HepG2 (cell line): ENCODE measurements at regions of chr12 and their contacts with region 1.

Region 1: GRCh38 chr12:86241600-86241999 is 14.6 kb downstream of the MGAT4C start:
- DNase-seq: no peak
- ATAC-seq: no peak
- H3K4me3 ChIP-seq: no peak overlapping the region
- H3K27ac ChIP-seq: no peak overlapping the region
- H3K4me1 ChIP-seq: no peaks in the 10 kb centered on the region
- H3K27me3 ChIP-seq: no peaks in the 10 kb centered on the region
- CTCF ChIP-seq: no peak
- EP300 ChIP-seq: no peak
- POLR2A ChIP-seq: no peak
- RAD21 ChIP-seq: no peak

Region 2: GRCh38 chr12:86213012-86213411 is 28.6 kb before region 1 on chr12:
- CTCF ChIA-PET with region 1: no interaction called
- POLR2A ChIA-PET with region 1: no interaction called
- in situ Hi-C with region 1: no loop called
- intact Hi-C with region 1: loop called (anchors 1 kb)
- DNase-seq: no peak
- ATAC-seq: no peak
- H3K4me3 ChIP-seq: no peak overlapping the region
- H3K27ac ChIP-seq: no peak overlapping the region
- H3K4me1 ChIP-seq: no peaks in the 10 kb centered on the region
- H3K27me3 ChIP-seq: no peaks in the 10 kb centered on the region
- CTCF ChIP-seq: no peak
- EP300 ChIP-seq: no peak
- POLR2A ChIP-seq: no peak
- RAD21 ChIP-seq: no peak